ENCODE measurements at regions of chr2 and their contacts with region 1.

Region 1: DNA sequence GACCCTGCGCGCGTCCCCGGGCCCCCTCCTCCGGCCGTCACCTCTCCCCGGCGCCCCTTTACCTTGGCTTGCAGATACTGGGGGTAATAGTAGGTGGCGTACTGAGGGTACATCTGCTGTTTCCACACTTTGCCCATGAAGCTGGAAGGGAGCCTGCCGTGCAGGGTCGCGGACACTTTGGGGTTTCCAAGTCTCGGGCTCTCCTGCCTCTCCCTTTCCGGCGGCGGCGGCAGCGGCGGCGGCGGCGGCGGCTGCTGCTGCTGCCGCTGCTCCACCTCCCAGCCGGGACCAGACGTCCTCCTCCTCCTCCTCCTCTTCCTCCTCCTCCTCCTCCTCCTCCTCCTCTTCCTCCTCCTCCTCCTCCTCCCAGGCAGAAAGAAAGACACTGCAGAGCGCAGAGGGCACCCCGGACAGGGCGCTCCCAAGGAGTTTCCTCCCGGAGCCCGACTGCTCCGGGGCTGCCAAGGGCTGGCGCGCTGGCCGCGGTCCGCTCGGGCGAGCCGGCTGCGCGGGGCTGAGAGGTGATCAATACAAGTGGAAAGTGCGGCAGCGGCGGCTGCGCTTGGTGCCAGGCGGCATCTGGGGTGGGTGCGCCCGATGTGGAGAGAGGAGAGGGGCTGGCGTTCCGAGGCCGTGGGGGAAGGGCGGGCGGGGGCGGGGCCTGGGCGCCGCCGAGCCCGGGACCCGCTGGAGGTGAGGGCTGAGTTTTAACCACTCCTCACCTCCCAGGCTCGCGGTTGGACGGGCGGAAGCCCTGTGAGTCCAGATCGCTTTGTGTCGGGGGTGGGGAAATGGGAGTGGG is at the start of gene RBMS1:
- DNase-seq: peak; percentile 36 to 63 (median 57)
- ATAC-seq: peak; percentile 55
- H3K4me3 ChIP-seq: peak within 1 kb of the TSS; percentile 64
- H3K4me3 Mint-ChIP-seq: peak within 1 kb of the TSS; percentile 87 to 98 (median 96)
- H3K27ac ChIP-seq: peak within 1 kb of the TSS; percentile 96
- H3K27ac Mint-ChIP-seq: peak within 1 kb of the TSS; percentile 91 to 98 (median 97)
- H3K4me1 ChIP-seq: peaks cover 3 to 10% of the 10 kb centered on the region in 2 donors
- H3K4me1 Mint-ChIP-seq: peaks cover 17 to 56% (median 47%) of the 10 kb centered on the region in 7 donors
- H3K27me3 ChIP-seq: no peaks in the 10 kb centered on the region
- H3K27me3 Mint-ChIP-seq: peaks cover 0 to 12% (median 0%) of the 10 kb centered on the region in 5 donors
- total RNA-seq, gene RBMS1: 74.4 to 123 (median 101) TPM

Region 2: DNA sequence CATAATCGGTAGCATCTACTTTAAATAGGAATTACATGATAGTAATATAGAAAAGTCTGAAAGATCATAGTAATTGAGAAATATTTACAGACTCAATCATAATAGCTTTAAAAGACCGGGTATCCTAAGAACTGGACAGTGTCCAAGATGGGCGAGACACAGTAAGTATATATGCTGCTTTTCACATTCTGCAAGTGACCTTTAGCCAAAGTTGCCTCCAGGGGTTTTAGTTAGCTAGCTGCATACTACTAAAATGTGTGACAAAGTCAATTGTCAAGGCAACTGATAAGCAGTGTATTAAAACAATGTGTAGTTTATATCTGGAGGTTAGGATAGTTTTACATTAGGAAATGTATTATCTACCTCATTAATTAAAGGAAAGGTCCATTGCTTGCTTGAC is 720.0 kb before region 1 on chr2:
- CTCF ChIA-PET with region 1: no interaction called
- POLR2A ChIA-PET with region 1: no interaction called
- intact Hi-C with region 1: no loop called
- DNase-seq: no peak
- ATAC-seq: no peak
- H3K4me3 ChIP-seq: no peak overlapping the region
- H3K4me3 Mint-ChIP-seq: no peak overlapping the region
- H3K27ac ChIP-seq: no peak overlapping the region
- H3K27ac Mint-ChIP-seq: peak overlapping the region in 2 of 9 donors; percentile 33 to 62
- H3K4me1 ChIP-seq: no peaks in the 10 kb centered on the region
- H3K4me1 Mint-ChIP-seq: peaks cover 0 to 6% (median 3%) of the 10 kb centered on the region in 7 donors
- H3K27me3 ChIP-seq: no peaks in the 10 kb centered on the region
- H3K27me3 Mint-ChIP-seq: no peaks in the 10 kb centered on the region

Region 3: DNA sequence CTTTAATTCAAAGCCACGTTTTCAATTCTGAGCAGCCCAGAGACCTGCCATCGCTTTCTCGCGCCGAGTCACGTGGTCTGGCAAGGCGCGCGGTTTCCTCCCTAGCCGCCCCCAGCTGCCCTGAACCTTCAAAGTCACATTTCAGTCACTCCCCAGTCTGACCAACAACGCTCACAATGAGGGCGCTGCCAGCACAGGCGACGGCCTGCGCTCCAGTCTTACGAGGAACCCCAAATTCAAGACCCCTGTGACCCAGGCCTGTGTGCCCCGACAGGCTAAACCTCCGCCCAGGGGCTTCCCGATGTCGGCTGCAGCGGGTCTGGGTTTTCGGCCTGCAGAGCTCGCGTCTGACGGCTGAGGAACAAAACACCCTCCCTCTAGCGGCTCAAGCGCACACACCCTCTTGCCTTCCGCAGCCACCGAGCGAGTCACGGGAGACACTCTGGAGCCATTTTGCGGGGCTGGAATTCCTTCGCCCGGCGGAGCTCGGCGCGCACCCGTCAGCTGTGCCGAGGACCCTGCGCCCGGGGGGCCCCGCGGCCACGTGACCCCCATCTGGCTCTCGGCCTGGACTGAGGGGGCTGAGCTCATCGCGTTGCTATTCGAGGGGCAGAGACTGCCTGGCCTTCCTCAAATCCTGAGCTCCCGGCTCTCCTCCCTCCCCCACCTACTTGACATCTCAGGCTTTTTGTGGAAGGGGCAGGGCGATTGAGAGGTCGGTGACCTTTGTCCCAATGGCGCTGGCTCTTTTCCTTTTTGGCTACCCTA is 223.4 kb before region 1 on chr2:
- CTCF ChIA-PET with region 1: no interaction called
- POLR2A ChIA-PET with region 1: no interaction called
- intact Hi-C with region 1: loop called in 1 of 2 experiments (anchors 5 kb)
- DNase-seq: peak; percentile 43 to 68 (median 63)
- ATAC-seq: peak; percentile 89
- H3K4me3 ChIP-seq: peak overlapping the region; percentile 59
- H3K4me3 Mint-ChIP-seq: peak overlapping the region; percentile 75 to 95 (median 88)
- H3K27ac ChIP-seq: peak overlapping the region; percentile 66
- H3K27ac Mint-ChIP-seq: peak overlapping the region; percentile 42 to 97 (median 89)
- H3K4me1 ChIP-seq: peaks cover 5 to 7% of the 10 kb centered on the region in 2 donors
- H3K4me1 Mint-ChIP-seq: peaks cover 9 to 44% (median 32%) of the 10 kb centered on the region in 7 donors
- H3K27me3 ChIP-seq: no peaks in the 10 kb centered on the region
- H3K27me3 Mint-ChIP-seq: peaks cover 0 to 10% (median 0%) of the 10 kb centered on the region in 5 donors

Region 4: GRCh38 chr2:160324161-160324800 is 169.1 kb before region 1 on chr2:
- CTCF ChIA-PET with region 1: interaction called, 4 read pairs
- POLR2A ChIA-PET with region 1: no interaction called
- intact Hi-C with region 1: loop called in 1 of 2 experiments (anchors 2 kb)
- DNase-seq: peak in 5 of 9 donors; percentile 10 to 38 (median 21)
- ATAC-seq: peak; percentile 64
- H3K4me3 ChIP-seq: no peak overlapping the region
- H3K4me3 Mint-ChIP-seq: peak overlapping the region in 1 of 10 donors; percentile 40
- H3K27ac ChIP-seq: no peak overlapping the region
- H3K27ac Mint-ChIP-seq: peak overlapping the region in 3 of 9 donors; percentile 10 to 65 (median 32)
- H3K4me1 ChIP-seq: peaks cover 10 to 58% of the 10 kb centered on the region in 2 donors
- H3K4me1 Mint-ChIP-seq: peaks cover 61 to 98% (median 96%) of the 10 kb centered on the region in 7 donors
- H3K27me3 ChIP-seq: no peaks in the 10 kb centered on the region
- H3K27me3 Mint-ChIP-seq: no peaks in the 10 kb centered on the region

Region 5: DNA sequence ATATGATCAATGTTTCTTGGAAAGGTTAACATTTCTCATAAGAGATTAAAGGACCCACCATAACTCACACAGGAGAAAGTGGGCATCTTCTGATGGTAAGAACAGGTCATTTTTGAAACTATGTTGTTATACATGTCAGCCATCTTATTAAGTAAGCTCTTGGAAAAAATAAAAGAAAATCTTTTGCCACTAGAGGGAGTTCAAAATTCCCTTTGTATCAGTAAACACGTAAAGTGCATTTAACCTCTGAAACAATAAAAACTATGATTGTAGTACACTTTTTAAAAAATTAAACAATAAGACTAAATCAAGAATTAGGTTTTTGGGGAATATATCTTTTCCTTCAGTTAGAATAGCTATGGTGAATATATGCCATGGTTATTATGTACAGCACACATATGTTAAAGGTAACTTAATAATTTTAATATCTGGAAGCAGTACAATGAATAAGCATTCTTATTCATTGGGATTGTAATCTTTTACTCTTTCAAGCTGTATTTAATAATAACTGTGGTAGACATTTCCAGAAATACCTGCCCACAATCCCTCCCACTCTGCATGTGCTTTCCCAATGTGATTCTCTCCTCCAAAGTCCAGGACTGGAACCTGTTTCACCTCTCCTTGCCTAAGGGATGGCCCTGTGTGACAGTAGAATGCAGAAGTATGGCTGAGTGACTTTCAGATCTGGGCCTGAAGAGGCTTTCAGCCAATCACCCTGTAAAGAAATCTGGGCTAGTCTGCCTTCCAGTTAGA is 64.0 kb before region 1 on chr2:
- CTCF ChIA-PET with region 1: interaction called, 5 read pairs
- POLR2A ChIA-PET with region 1: interaction called, 3 read pairs
- intact Hi-C with region 1: loop called (anchors 1 kb)
- DNase-seq: peak in 6 of 9 donors; percentile 44 to 67 (median 58)
- ATAC-seq: peak; percentile 70
- H3K4me3 ChIP-seq: no peak overlapping the region
- H3K4me3 Mint-ChIP-seq: peak overlapping the region in 6 of 10 donors; percentile 7 to 94 (median 30)
- H3K27ac ChIP-seq: peak overlapping the region; percentile 69
- H3K27ac Mint-ChIP-seq: peak overlapping the region; percentile 51 to 93 (median 89)
- H3K4me1 ChIP-seq: peaks cover 33 to 35% of the 10 kb centered on the region in 2 donors
- H3K4me1 Mint-ChIP-seq: peaks cover 32 to 91% (median 74%) of the 10 kb centered on the region in 7 donors
- H3K27me3 ChIP-seq: no peaks in the 10 kb centered on the region
- H3K27me3 Mint-ChIP-seq: no peaks in the 10 kb centered on the region

Region 6: DNA sequence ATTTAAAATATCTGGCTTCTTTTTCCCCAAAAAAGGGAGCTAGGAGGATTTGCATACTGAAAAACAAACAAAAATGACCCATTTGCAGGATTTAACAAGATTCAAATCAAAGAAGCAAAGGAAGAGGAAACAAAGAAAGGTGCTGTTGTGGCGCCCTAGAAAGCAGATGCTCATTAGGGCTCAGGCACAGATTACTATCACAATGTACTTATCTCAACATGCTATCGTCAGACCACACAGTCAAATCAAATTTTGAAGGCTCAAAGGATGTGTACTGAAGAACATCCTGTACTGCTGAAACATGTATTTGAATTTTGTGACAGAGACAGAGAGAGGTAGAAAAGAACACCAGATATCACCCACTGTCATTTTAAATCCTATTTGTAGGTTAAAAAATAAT is 10.8 kb before region 1 on chr2:
- CTCF ChIA-PET with region 1: no interaction called
- POLR2A ChIA-PET with region 1: interaction called, 6 read pairs
- intact Hi-C with region 1: loop called (anchors 1 kb)
- DNase-seq: peak in 7 of 9 donors; percentile 58 to 87 (median 78)
- ATAC-seq: peak; percentile 97
- H3K4me3 ChIP-seq: no peak overlapping the region
- H3K4me3 Mint-ChIP-seq: peak overlapping the region; percentile 45 to 81 (median 72)
- H3K27ac ChIP-seq: peak overlapping the region; percentile 70
- H3K27ac Mint-ChIP-seq: peak overlapping the region; percentile 73 to 97 (median 95)
- H3K4me1 ChIP-seq: peaks cover 18 to 66% of the 10 kb centered on the region in 2 donors
- H3K4me1 Mint-ChIP-seq: peaks cover 33 to 100% (median 85%) of the 10 kb centered on the region in 7 donors
- H3K27me3 ChIP-seq: no peaks in the 10 kb centered on the region
- H3K27me3 Mint-ChIP-seq: no peaks in the 10 kb centered on the region

Region 7: DNA sequence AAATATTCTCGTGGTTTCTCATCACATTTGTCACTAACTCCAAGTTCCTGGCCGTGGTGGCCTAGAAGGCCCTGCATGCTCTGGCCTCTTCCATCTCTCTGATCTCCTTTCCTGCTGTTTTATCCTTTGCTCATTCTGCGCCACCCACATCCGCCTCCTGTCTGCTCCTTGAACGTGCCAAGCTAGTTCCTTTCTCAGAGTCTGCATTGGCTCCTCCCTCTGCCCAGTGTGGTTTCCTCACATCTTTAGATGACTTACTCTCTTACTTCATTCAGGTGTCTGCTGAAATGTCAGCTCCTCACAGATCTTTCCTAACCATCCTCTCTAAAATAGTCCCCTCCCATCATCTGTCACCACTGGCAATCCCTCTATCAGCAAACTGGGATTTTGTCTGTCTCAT is 158.8 kb after region 1 on chr2:
- CTCF ChIA-PET with region 1: no interaction called
- POLR2A ChIA-PET with region 1: no interaction called
- intact Hi-C with region 1: loop called (anchors 2 to 5 kb)
- DNase-seq: peak; percentile 20 to 81 (median 72)
- ATAC-seq: peak; percentile 97
- H3K4me3 ChIP-seq: no peak overlapping the region
- H3K4me3 Mint-ChIP-seq: peak overlapping the region; percentile 13 to 79 (median 52)
- H3K27ac ChIP-seq: no peak overlapping the region
- H3K27ac Mint-ChIP-seq: peak overlapping the region in 8 of 9 donors; percentile 1 to 47 (median 8)
- H3K4me1 ChIP-seq: peaks cover 11 to 22% of the 10 kb centered on the region in 2 donors
- H3K4me1 Mint-ChIP-seq: peaks cover 23 to 45% (median 34%) of the 10 kb centered on the region in 7 donors
- H3K27me3 ChIP-seq: no peaks in the 10 kb centered on the region
- H3K27me3 Mint-ChIP-seq: peaks cover 3 to 10% (median 8%) of the 10 kb centered on the region in 5 donors

Region 8: GRCh38 chr2:162013514-162014475 is 1520.4 kb after region 1 on chr2:
- CTCF ChIA-PET with region 1: no interaction called
- POLR2A ChIA-PET with region 1: no interaction called
- intact Hi-C with region 1: loop called in 1 of 2 experiments (anchors 5 kb)
- DNase-seq: peak in 7 of 9 donors; percentile 30 to 71 (median 55)
- ATAC-seq: peak; percentile 36
- H3K4me3 ChIP-seq: peak overlapping the region; percentile 11
- H3K4me3 Mint-ChIP-seq: peak overlapping the region; percentile 52 to 86 (median 70)
- H3K27ac ChIP-seq: peak overlapping the region; percentile 95
- H3K27ac Mint-ChIP-seq: peak overlapping the region; percentile 94 to 99 (median 98)
- H3K4me1 ChIP-seq: peaks cover 47 to 72% of the 10 kb centered on the region in 2 donors
- H3K4me1 Mint-ChIP-seq: peaks cover 41 to 86% (median 81%) of the 10 kb centered on the region in 7 donors
- H3K27me3 ChIP-seq: no peaks in the 10 kb centered on the region
- H3K27me3 Mint-ChIP-seq: no peaks in the 10 kb centered on the region